Activated B cell treated with CpG ODN at 0.5 μM for 24 hours (primary cell): ENCODE measurements at regions of chr3 and their contacts with region 1.

Region 1: DNA sequence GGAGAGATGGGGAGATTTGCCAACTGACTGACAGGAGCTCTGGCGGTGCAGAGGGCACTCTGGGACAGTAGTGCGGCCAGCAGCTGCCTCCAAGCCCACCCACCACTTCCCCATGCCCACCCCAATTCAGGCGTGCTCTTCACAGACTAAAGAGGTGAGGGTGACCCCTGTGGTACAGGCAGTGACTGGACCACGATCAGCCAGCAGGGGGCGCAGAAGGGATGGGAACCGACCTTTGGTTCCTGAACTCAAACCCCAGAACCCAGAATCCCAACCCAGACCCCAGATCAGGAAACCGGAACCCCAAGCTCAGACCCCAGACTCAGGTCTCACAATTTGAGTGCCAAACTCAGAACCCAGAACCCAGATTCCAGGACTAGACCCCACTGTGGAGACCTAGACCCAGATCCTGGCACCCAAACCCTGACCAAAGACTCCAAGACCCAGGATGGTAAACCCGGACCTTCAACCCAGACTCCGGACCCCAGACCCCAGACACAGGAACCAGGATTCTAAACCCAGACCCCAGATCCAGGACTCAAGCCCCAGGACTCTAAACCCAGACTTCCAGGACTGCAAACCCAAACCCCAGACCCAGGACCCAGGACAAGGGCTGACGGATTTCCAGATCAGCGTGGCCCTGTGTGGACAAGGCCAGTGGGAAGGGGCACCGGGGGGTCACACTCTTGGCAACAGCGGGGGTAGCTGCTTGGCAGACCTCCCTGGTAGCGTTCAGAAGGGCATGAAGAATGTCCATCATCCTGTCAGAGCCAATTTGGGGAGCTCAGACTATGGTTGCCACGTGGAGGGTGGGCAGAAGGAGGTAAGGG is 3.7 kb upstream of the MYL3 start:
- DNase-seq: peak; percentile 75
- ATAC-seq: peak; percentile 76
- H3K4me3 Mint-ChIP-seq: no peak overlapping the region
- H3K27ac Mint-ChIP-seq: no peak overlapping the region
- H3K4me1 Mint-ChIP-seq: no peaks in the 10 kb centered on the region
- H3K27me3 Mint-ChIP-seq: peaks cover 7% of the 10 kb centered on the region
- CTCF ChIP-seq: peak; percentile 33

Region 2: DNA sequence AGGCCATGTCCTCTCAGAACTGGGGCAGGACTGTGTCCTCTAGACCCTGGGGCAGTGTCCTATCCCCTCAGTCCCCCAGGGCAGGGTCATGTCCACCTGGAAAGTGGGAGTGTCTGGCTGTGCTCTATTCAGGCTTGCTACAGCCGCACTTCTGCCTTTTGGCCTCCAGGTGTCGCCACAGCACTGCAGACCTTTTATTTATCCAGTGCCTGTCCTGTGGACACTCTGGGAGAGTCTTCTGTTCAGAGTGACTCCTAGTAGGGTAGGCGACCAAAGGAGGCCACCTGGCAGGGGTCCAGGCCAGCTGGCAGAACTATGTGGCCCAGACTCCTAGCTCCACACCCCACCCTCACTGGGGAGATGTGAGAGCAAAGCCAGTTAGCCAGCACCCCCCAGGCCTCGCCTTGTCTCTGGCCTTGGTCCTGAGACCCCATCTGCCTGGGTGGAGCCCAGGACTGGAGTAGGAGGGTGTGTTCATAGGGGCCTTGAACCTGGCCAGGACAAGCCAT is 161.9 kb before region 1 on chr3:
- CTCF ChIA-PET with region 1: no interaction called
- POLR2A ChIA-PET with region 1: no interaction called
- intact Hi-C with region 1: loop called (anchors 1 kb)
- DNase-seq: peak; percentile 54
- ATAC-seq: peak; percentile 87
- H3K4me3 Mint-ChIP-seq: no peak overlapping the region
- H3K27ac Mint-ChIP-seq: no peak overlapping the region
- H3K4me1 Mint-ChIP-seq: no peaks in the 10 kb centered on the region
- H3K27me3 Mint-ChIP-seq: peaks cover 15% of the 10 kb centered on the region
- CTCF ChIP-seq: peak; percentile 78

Region 3: DNA sequence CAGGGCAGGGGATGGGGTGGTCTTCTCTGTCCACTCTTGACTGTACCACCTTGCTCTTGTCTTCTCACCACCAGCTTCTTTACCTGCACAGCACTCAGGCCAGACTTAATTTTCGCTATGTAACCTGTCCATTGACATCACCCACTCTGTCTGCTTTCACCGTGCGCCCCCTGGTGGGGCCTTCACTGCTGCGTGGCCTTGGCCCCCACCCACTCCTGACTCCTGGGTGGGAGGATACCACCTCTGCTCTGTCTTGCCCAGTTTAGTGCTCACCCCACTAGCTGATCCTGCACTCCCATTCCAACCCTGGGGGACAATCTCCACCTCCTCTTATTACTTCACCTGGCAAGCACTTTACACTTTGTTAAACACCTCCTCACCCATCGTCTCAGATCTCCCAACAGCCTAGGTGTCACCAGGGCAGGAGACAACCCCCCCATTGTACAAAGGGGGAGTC is 28.3 kb after region 1 on chr3:
- CTCF ChIA-PET with region 1: interaction called, 11 read pairs
- POLR2A ChIA-PET with region 1: no interaction called
- intact Hi-C with region 1: loop called (anchors 1 kb)
- DNase-seq: peak; percentile 76
- ATAC-seq: peak; percentile 77
- H3K4me3 Mint-ChIP-seq: no peak overlapping the region
- H3K27ac Mint-ChIP-seq: no peak overlapping the region
- H3K4me1 Mint-ChIP-seq: peaks cover 24% of the 10 kb centered on the region
- H3K27me3 Mint-ChIP-seq: peaks cover 37% of the 10 kb centered on the region
- CTCF ChIP-seq: no peak

Region 4: DNA sequence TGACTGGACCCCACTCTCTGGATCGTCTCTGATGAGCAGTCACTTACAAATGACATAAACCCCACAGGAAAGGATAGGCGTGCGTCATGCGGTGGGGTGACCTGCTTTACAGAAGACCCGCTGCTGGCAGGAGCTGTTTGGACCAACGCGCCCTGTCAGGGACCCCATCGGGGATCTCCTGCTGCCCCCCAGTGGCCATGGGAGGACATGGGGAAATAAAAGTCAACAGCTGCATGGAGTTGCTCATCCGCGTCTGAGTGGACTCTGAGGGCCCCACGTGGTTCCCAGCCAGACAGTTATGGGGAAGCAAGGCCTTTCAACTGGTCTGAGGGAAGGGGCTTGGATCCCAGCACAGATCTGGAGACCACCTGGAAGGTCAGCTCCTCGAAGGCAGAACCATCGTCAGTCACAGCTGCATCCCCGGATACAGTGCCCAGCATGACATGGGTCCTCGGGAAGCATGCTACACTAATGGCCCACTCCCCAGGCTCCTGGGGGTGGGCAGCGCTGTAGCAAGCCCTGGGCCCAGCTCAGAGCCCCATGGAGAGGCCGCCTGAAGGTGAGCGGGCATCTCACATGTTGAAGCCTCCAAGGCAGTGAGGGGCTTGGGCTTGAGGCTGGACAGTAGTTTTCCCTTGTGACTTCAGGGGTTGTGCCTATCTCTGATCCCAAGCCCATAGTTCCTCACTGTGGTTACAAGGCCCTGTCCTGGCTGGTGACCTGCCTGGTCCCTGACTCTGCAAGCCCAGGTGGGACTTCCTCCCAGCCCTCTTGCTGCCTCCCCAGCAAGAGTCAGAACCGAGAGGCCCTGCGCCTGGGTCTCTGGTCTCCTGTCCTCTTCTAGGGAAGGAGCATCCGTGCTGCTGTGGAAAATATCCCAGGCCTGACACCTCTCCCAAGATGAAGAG is 42.9 kb after region 1 on chr3:
- CTCF ChIA-PET with region 1: interaction called, 6 read pairs
- POLR2A ChIA-PET with region 1: no interaction called
- intact Hi-C with region 1: loop called (anchors 1 kb)
- DNase-seq: peak; percentile 68
- ATAC-seq: peak; percentile 91
- H3K4me3 Mint-ChIP-seq: no peak overlapping the region
- H3K27ac Mint-ChIP-seq: no peak overlapping the region
- H3K4me1 Mint-ChIP-seq: peaks cover 7% of the 10 kb centered on the region
- H3K27me3 Mint-ChIP-seq: no peaks in the 10 kb centered on the region
- CTCF ChIP-seq: peak; percentile 44

Region 5: DNA sequence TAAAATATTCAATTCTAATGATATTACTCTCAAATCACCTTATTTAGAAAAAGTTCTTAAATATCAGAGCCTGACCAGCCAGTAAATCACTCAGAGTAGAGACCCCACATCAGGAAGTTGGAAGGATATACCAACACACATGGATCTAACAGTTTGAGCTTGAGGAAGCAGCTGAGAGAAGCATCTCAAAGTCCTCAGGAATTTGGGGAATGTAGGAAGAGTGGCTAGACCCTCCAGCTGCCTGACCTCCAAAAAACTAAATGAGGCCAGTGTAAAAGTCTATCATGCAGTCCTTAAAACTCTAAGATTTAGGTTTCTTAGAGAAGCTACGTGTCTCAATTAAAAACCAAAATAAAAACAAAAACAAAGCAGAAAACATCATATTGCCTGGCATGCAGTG is 241.6 kb after region 1 on chr3:
- CTCF ChIA-PET with region 1: no interaction called
- POLR2A ChIA-PET with region 1: no interaction called
- intact Hi-C with region 1: no loop called
- DNase-seq: no peak
- ATAC-seq: no peak
- H3K4me3 Mint-ChIP-seq: no peak overlapping the region
- H3K27ac Mint-ChIP-seq: no peak overlapping the region
- H3K4me1 Mint-ChIP-seq: peaks cover 6% of the 10 kb centered on the region
- H3K27me3 Mint-ChIP-seq: no peaks in the 10 kb centered on the region
- CTCF ChIP-seq: no peak

Region 6: DNA sequence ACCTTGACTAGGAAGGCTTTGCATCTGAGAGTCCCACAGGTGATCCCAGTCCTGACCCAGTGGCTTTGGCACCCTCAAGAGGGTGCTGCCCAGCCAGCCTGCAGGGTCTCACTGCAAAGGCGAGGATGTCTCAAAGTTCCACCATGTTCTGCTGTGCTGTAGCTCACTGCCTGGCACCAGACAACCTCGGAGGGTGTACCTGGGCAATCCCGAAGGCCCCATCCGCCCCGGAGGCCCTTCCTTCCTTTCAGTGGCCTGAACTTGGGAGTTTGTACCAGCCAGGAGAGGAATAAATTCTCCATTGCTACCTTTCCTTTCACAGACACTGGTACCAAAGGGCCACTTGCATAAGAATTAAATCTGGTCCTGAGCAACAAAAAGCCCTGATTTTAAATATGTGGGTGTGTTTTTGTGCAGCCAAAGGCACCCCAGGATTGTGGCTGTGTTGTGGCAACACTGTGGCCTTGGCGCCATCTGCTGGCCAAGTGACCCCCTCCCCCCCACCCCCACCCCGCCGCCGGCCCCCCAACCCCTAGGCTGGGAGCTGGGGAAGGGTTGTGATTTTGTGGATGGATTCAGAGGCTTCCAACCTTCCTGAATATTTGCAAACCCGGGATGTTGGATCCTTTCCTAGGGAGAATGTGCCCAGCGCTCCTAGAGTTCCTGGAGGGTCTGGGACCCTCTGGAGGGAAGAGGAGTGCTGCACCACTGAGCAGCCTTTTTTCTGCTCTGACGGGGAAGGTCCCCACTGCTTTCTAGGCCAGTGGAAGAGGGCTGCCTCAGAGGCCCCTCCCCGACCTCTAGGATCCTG is 504.2 kb after region 1 on chr3:
- CTCF ChIA-PET with region 1: no interaction called
- POLR2A ChIA-PET with region 1: no interaction called
- intact Hi-C with region 1: loop called (anchors 2 kb)
- DNase-seq: no peak
- ATAC-seq: peak; percentile 52
- H3K4me3 Mint-ChIP-seq: no peak overlapping the region
- H3K27ac Mint-ChIP-seq: no peak overlapping the region
- H3K4me1 Mint-ChIP-seq: no peaks in the 10 kb centered on the region
- H3K27me3 Mint-ChIP-seq: no peaks in the 10 kb centered on the region
- CTCF ChIP-seq: no peak